GM18951 (cell line): ENCODE measurements at regions of chr12 and their contacts with region 1.

Region 1: GRCh38 chr12:90978117-90978770 is 23.3 kb upstream of the CCER1 start:
- POLR2A ChIP-seq: no peak

Region 2: DNA sequence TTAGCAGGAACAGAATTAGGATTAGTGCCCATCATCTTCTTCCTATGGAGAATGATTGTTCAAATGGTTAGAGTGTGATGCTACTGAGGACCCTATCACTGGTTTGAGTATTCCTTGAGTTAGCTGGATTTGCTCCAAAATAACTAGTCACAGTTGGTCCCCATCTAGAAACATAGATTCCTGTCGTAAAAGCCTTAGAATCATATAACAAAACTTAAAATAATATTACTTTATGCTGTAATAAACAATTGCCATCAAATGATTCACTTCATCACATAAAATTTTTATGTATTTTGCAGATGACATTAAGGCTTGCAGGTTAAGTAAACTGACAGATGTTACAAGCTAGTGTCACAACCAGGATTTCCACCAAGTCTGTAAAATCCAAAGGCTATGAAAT is 233.0 kb before region 1 on chr12:
- in situ Hi-C with region 1: no loop called
- POLR2A ChIP-seq: no peak

Region 3: DNA sequence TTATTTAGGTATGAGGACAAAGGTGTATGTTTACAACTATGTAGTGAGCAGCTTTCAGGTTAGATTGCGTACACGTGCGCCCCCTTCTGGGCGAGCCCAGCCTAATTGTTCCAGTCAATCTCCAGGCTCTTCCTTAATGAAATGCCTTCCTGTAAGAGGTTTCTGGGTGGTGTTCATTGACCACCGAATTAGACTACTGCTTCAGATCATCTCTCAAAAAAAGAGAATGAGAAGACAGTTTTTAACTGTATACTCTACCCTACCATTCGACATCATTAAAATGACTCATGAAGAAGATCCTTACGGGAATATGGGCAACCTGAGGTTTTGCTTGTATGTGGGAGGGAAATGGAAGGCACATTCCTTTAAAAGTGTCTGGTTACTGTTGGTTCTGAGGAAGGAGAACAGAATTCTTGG is 130.9 kb after region 1 on chr12:
- in situ Hi-C with region 1: loop called (anchors 10 kb)
- POLR2A ChIP-seq: no peak

Region 4: DNA sequence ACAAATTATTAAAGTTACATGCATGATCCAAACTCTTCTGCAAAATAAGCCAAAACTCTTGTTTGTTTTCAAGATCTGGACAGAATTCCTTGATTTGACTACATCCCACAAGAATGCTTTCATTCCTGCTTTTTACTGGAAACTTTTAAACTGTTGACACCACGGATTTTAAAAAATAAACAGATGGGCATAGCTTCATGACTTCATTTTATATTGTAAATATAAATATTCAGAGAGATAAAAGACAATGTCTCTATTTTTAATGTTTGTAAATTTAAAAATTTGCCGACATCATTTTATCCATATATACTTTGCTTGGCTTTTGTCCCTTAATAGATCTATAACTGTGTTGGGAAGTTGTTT is 338.6 kb after region 1 on chr12:
- in situ Hi-C with region 1: loop called (anchors 25 kb)
- POLR2A ChIP-seq: no peak